Caco-2 (cell line): ENCODE measurements at regions of chr1 and their contacts with region 1.

Region 1: DNA sequence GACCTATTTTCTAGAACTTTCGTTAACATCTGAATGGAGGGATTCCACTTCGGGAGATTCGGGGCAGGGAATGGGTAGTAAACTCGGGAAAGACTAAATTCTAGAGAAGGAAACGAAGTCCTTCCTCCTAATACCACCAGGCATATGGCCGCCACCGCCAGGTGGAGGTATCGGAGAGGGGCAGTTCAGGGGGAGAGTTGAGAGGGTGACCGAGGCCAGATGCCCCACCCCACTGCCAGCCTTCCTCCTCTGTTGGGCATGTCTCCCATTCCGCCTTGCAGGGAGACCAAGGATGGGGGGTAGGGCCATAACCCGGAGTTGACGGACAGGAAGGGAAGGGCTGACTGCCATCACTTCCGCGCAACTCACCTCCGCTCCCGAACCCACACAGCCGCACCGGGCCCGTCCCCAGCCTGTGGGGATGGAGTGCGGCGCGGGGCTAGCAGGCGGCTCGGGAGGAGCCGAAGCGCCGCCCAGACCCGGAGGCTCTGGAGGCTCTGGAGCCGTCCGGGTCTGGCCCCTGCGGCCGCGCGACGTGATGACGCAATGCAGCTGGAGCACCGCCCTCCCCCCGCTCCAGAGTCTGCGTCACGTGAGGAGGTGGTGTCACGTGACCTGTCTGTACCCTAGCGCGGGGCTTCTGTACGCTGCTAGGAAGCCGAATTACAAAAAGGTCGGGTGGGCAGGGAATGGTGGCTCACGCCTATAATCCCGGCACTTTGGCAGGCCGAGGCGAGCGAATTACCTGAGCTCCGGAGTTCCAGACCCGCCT is at the start of gene KLHL12:
- DNase-seq: peak; percentile 97 to 98
- H3K4me3 ChIP-seq: peak within 1 kb of the TSS; percentile 73
- H3K4me3 Mint-ChIP-seq: peak within 1 kb of the TSS; percentile 97
- H3K27ac Mint-ChIP-seq: peak within 1 kb of the TSS; percentile 94
- H3K4me1 ChIP-seq: 0 out of 2 replicates have a peak, but pooled peaks cover 3% of the 10 kb centered on the region
- H3K4me1 Mint-ChIP-seq: no peaks in the 10 kb centered on the region
- H3K27me3 ChIP-seq: no peaks in the 10 kb centered on the region
- H3K27me3 Mint-ChIP-seq: no peaks in the 10 kb centered on the region
- CTCF ChIP-seq: peak; percentile 65 to 82
- total RNA-seq, gene KLHL12: 23.2 and 23.6 TPM in 2 replicates

Region 2: DNA sequence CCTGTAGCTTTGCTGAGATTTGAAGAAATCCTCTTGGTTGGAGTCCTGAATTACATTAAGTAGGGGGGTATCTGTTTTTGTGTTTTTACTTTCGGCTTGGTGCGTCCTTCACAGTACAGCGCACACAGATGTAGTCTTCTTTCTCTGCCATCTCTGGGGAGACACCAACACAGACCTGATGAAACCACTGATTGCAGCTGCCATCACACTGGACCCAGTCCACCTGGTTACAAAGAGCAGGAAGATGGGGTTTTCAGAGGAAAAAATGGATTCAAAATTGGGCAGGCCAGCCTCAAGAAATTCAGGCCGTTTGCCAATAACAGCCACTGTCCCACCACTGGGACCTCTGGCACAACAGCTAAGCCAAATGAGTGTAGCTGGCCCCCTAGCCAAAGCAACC is 198.0 kb before region 1 on chr1:
- CTCF ChIA-PET with region 1: no interaction called
- POLR2A ChIA-PET with region 1: no interaction called
- intact Hi-C with region 1: no loop called
- DNase-seq: no peak
- H3K4me3 ChIP-seq: no peak overlapping the region
- H3K4me3 Mint-ChIP-seq: no peak overlapping the region
- H3K27ac Mint-ChIP-seq: no peak overlapping the region
- H3K4me1 ChIP-seq: no peaks in the 10 kb centered on the region
- H3K4me1 Mint-ChIP-seq: no peaks in the 10 kb centered on the region
- H3K27me3 ChIP-seq: no peaks in the 10 kb centered on the region
- H3K27me3 Mint-ChIP-seq: no peaks in the 10 kb centered on the region
- CTCF ChIP-seq: no peak

Region 3: GRCh38 chr1:202968840-202969295 is 42.0 kb after region 1 on chr1:
- CTCF ChIA-PET with region 1: interaction called, 3 read pairs
- POLR2A ChIA-PET with region 1: no interaction called
- intact Hi-C with region 1: loop called (anchors 1 kb)
- DNase-seq: peak; percentile 64 to 68
- H3K4me3 ChIP-seq: no peak overlapping the region
- H3K4me3 Mint-ChIP-seq: peak overlapping the region; percentile 83
- H3K27ac Mint-ChIP-seq: no peak overlapping the region
- H3K4me1 ChIP-seq: peaks cover 25% of the 10 kb centered on the region
- H3K4me1 Mint-ChIP-seq: peaks cover 13% of the 10 kb centered on the region
- H3K27me3 ChIP-seq: no peaks in the 10 kb centered on the region; the same call in 1 of the 2 replicates
- H3K27me3 Mint-ChIP-seq: peaks cover 3% of the 10 kb centered on the region
- CTCF ChIP-seq: peak; percentile 66 to 87